ENCODE measurements at regions of chr14 and their contacts with region 1.

Region 1: DNA sequence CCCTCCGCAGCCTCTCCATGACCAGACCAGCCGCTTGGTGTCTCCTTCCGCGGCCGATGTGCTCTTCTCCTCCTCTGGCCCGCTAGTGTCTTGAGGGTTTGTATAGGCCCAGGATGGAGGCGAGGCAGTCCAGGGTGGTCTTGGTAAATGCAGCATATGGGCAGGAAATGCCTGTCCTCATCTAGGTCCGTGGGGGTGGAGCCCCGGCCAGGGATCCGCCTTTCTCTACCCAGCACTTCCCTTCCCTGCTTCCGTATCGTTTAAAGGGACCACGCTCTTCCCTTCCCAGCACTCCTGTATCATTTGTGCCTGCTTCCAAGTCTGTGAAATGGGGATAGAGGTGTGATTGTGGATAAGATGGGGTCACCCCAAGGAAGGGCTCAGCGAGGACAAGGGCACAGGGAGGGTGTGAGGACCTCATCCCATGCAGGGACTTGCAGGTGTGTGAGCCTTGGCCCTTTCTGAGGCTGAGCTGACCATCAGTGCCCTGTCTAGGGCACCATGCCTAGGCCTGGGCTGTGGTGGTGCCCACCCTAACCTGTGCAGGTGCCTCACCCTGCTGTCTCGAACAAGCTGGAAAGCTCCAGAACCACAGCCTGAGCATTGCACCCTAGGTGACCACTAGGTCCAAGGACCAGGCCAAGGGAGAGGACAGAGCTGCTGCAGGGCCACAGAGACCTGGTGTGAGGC is 326.8 kb upstream of the RTL1 start:
- DNase-seq: no peak
- H3K4me3 ChIP-seq: no peak overlapping the region
- CTCF ChIP-seq: no peak

Region 2: DNA sequence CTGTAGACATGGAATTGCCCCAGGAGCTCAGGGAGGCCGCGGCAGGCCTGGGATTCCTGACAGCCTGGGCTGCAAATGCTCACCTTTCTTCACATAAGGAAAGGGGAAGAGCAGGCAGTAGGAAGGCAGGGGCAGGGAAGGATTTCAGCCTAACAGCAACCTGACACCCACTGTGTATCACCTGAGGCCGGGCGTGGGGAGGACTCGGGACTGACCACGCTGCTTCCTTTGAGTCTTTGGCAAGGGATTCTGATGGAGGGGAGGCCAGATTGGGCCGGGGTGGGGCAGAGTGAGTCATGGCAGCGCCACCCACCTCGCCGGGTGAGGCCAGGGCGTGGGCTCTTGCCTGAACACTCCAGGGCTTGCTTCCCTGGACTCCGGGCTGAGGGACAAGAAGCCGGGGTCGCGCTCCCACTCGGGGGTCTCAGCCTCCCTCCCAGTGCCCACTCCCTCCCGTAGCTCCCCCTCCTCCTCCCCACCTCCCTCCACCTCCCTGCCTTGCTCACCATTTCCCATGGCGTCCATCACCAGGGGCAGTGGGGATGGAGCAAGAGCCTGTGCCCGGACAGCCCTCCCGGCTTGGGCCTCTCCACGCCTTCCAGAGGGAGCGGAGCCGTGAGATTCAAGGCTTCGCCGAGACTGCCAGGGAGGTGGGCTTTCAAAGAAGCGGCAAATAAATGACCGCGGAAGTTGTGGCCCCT is 78.9 kb before region 1 on chr14:
- in situ Hi-C with region 1: no loop called
- DNase-seq: no peak
- H3K4me3 ChIP-seq: no peak overlapping the region
- CTCF ChIP-seq: no peak

Region 3: DNA sequence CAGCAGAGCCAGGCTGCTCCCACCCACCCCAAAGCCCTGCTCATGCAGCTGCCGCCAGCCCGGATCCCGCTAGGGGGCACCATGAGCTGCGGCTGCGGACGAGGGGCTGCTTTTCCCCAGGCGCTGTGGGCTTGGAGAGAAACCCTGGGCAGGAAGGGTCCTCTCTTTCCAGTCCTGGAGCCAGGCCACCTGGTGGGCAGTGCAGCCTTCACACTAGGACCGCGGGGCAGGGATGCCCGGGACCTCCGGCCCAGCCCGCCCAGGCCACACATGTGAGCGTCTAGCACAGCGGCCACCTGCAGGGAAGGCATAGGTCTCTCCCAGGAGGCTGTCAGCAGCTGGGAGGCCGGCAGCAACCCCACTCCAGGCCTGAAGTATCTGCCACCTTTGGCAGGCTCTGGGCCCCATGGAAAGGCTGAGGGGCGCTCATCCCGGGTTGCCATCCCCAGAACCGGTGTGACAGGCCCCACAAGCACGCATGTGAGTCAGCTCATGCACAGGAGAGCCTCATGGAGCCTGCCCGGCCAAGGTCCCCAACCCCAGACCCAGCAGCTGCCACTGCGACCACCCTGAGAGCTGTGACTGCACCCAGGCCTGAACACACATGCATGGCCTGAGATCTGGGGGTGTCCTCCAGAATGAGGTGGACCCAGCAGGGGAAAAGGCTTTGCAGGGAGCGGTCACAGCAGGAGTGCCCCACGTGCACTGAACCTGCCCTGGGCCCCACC is 46.8 kb before region 1 on chr14:
- in situ Hi-C with region 1: no loop called
- DNase-seq: no peak
- H3K4me3 ChIP-seq: no peak overlapping the region
- CTCF ChIP-seq: peak; percentile 55

Region 4: GRCh38 chr14:101501341-101501740 is 271.0 kb after region 1 on chr14:
- in situ Hi-C with region 1: loop called (anchors 5 kb)
- DNase-seq: no peak
- H3K4me3 ChIP-seq: no peak overlapping the region
- CTCF ChIP-seq: no peak

Measured in astrocyte of the cerebellum (primary cell).